AG04449 (cell line): ENCODE measurements at regions of chr2 and their contacts with region 1.

Region 1: GRCh38 chr2:1730015-1730927 is 14.0 kb downstream of the PXDN start:
- DNase-seq: peak; percentile 74
- H3K4me3 ChIP-seq: peak overlapping the region; percentile 26
- CTCF ChIP-seq: no peak

Region 2: GRCh38 chr2:1742681-1743395 is 12.6 kb after region 1 on chr2:
- CTCF ChIA-PET with region 1: interaction called, 5 read pairs
- POLR2A ChIA-PET with region 1: interaction called, 64 read pairs
- DNase-seq: no peak
- H3K4me3 ChIP-seq: peak overlapping the region; percentile 75
- CTCF ChIP-seq: peak; percentile 71